ENCODE measurements at regions of chr14 and their contacts with region 1.

Region 1: GRCh38 chr14:65287264-65288131 is 125.0 kb upstream of the FUT8 start:
- DNase-seq: peak; percentile 60
- ATAC-seq: peak; percentile 64
- H3K4me3 Mint-ChIP-seq: peak overlapping the region; percentile 74
- H3K27ac Mint-ChIP-seq: peak overlapping the region; percentile 96
- H3K4me1 Mint-ChIP-seq: peaks cover 89% of the 10 kb centered on the region
- H3K27me3 Mint-ChIP-seq: no peaks in the 10 kb centered on the region
- CTCF ChIP-seq: no peak

Region 2: GRCh38 chr14:65102441-65103149 is 184.9 kb before region 1 on chr14 and contains the start of gene MAX:
- CTCF ChIA-PET with region 1: no interaction called
- POLR2A ChIA-PET with region 1: interaction called, 3 read pairs
- intact Hi-C with region 1: loop called (anchors 5 kb)
- DNase-seq: peak; percentile 92
- ATAC-seq: peak; percentile 86
- H3K4me3 Mint-ChIP-seq: peak within 1 kb of the TSS; percentile 89
- H3K27ac Mint-ChIP-seq: peak within 1 kb of the TSS; percentile 95
- H3K4me1 Mint-ChIP-seq: peaks cover 42% of the 10 kb centered on the region
- H3K27me3 Mint-ChIP-seq: no peaks in the 10 kb centered on the region
- CTCF ChIP-seq: no peak
- total RNA-seq, gene MAX: 115 and 116 TPM in 2 replicates

Region 3: GRCh38 chr14:65179918-65180724 is 107.4 kb before region 1 on chr14:
- CTCF ChIA-PET with region 1: no interaction called
- POLR2A ChIA-PET with region 1: interaction called, 12 read pairs
- intact Hi-C with region 1: no loop called
- DNase-seq: peak; percentile 46
- ATAC-seq: peak; percentile 93
- H3K4me3 Mint-ChIP-seq: peak overlapping the region; percentile 71
- H3K27ac Mint-ChIP-seq: peak overlapping the region; percentile 86
- H3K4me1 Mint-ChIP-seq: peaks cover 37% of the 10 kb centered on the region
- H3K27me3 Mint-ChIP-seq: no peaks in the 10 kb centered on the region
- CTCF ChIP-seq: no peak

Region 4: GRCh38 chr14:65229751-65230749 is 57.4 kb before region 1 on chr14:
- CTCF ChIA-PET with region 1: interaction called, 4 read pairs
- POLR2A ChIA-PET with region 1: interaction called, 35 read pairs
- intact Hi-C with region 1: loop called (anchors 1 kb)
- DNase-seq: no peak
- ATAC-seq: peak; percentile 32
- H3K4me3 Mint-ChIP-seq: peak overlapping the region; percentile 86
- H3K27ac Mint-ChIP-seq: peak overlapping the region; percentile 87
- H3K4me1 Mint-ChIP-seq: peaks cover 64% of the 10 kb centered on the region
- H3K27me3 Mint-ChIP-seq: no peaks in the 10 kb centered on the region
- CTCF ChIP-seq: no peak

Region 5: GRCh38 chr14:65321370-65321875 is 33.9 kb after region 1 on chr14:
- CTCF ChIA-PET with region 1: interaction called, 11 read pairs
- POLR2A ChIA-PET with region 1: interaction called, 48 read pairs
- intact Hi-C with region 1: loop called (anchors 2 kb)
- DNase-seq: no peak
- ATAC-seq: no peak
- H3K4me3 Mint-ChIP-seq: peak overlapping the region; percentile 21
- H3K27ac Mint-ChIP-seq: peak overlapping the region; percentile 62
- H3K4me1 Mint-ChIP-seq: peaks cover 77% of the 10 kb centered on the region
- H3K27me3 Mint-ChIP-seq: no peaks in the 10 kb centered on the region
- CTCF ChIP-seq: no peak

Region 6: DNA sequence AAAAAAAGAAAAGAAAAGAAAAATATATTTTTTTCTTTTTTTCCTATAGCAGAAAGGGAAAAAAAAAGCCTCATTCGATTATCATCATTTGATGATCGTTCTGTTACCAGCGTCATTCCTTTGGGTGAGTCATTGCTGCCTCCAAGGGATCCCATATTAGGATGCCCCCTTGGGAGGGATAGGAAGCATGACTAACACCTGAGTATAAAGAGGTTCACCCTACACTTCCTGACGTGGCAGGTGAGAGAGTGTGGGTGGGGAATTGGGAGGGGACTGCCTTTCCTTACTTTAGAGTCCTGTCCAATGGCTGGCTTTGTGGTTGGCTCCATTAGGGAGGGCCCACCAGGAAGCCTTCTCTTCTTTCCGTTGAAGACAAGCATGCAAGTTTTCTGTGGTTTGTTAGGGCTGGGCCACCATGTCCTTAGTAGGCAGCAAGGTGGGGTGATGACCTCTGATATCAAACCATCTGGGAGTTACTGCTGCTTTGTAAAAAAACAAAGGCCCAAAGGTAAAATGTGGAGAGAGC is 68.9 kb after region 1 on chr14:
- CTCF ChIA-PET with region 1: interaction called, 3 read pairs
- POLR2A ChIA-PET with region 1: interaction called, 27 read pairs
- intact Hi-C with region 1: loop called (anchors 1 kb)
- DNase-seq: no peak
- ATAC-seq: no peak
- H3K4me3 Mint-ChIP-seq: no peak overlapping the region
- H3K27ac Mint-ChIP-seq: peak overlapping the region; percentile 71
- H3K4me1 Mint-ChIP-seq: peaks cover 87% of the 10 kb centered on the region
- H3K27me3 Mint-ChIP-seq: no peaks in the 10 kb centered on the region
- CTCF ChIP-seq: no peak

Region 7: GRCh38 chr14:65824285-65824977 is 536.9 kb after region 1 on chr14:
- CTCF ChIA-PET with region 1: interaction called, 20 read pairs
- POLR2A ChIA-PET with region 1: no interaction called
- intact Hi-C with region 1: loop called (anchors 1 kb)
- DNase-seq: no peak
- ATAC-seq: peak; percentile 99
- H3K4me3 Mint-ChIP-seq: no peak overlapping the region
- H3K27ac Mint-ChIP-seq: no peak overlapping the region
- H3K4me1 Mint-ChIP-seq: peaks cover 1% of the 10 kb centered on the region
- H3K27me3 Mint-ChIP-seq: peaks cover 5% of the 10 kb centered on the region
- CTCF ChIP-seq: peak; percentile 82

Measured in activated B cell treated with CpG ODN at 0.5 μM for 24 hours (primary cell).